Colonic mucosa (tissue), 4 donors: ENCODE measurements at regions of chr17 and their contacts with region 1.

Region 1: GRCh38 chr17:29369831-29370735 is 20.1 kb upstream of the TAOK1 start:
- DNase-seq: peak; percentile 65
- H3K4me3 ChIP-seq: peak overlapping the region; percentile 4
- H3K27ac ChIP-seq: peak overlapping the region; percentile 19
- H3K4me1 ChIP-seq: no peaks in the 10 kb centered on the region
- H3K27me3 ChIP-seq: no peaks in the 10 kb centered on the region
- CTCF ChIP-seq: peak; percentile 77

Region 2: DNA sequence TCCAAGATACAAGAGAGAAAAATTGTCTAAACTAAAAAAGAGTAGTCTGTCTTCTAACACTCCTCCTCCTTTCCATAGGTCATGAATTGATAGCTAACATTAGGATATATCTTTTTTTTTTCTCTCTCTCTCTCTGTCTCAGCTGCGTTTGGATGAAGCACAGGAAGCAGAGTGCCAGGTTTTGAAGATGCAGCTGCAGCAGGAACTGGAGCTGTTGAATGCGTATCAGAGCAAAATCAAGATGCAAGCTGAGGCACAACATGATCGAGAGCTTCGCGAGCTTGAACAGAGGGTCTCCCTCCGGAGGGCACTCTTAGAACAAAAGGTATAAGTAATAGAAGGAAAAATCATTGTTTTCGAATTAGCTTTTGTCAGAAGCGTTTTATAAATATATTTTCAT is 163.9 kb after region 1 on chr17:
- intact Hi-C with region 1: loop called (anchors 2 kb)
- DNase-seq: no peak
- H3K4me3 ChIP-seq: no peak overlapping the region
- H3K27ac ChIP-seq: no peak overlapping the region
- H3K4me1 ChIP-seq: no peaks in the 10 kb centered on the region
- H3K27me3 ChIP-seq: no peaks in the 10 kb centered on the region
- CTCF ChIP-seq: no peak